ENCODE measurements at regions of chr11 and their contacts with region 1.

Region 1: DNA sequence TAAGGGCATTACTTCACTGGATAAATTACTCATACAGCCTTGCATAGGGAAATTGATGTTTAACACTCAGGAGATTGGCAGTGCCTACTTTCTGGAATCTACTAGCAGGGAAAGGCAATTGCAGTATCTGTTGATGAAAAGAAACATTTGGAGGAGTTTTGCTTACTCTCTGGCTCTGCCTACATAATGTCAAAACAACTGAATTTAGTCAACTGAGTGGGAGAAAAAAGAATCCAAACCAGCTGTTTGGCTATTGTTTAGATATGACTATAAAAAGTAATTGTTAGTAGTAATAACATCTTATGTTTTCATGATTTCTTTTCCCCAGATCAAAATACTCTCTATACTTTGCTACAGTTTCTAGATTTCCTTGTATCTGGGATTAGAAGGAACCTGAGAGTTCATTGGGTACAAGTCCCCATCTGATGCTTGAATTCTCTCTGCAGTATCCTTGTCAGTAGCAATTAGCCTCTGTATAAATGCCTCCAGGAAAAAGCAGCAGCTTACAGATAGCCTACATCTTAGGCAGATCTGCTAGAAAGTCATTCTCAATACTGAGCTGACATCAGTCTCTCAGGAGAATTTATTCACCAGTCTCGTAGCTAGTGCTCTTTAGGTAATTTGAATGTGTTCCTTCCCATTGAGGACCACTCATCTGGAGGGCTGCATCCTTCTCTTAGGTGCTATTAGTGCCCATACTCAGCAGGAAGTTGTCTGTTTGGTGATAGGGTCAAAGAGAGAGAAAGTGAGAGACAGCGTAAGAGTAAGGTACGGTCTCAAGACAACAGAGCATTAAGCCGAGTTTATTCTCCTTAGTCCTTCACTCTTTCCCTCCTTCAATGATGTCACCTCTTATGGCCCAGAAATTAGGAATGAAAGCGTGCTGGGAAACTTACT is 185.9 kb upstream of the CCDC90B start:
- DNase-seq: no peak
- ATAC-seq: no peak
- H3K4me3 ChIP-seq: no peak overlapping the region
- H3K27ac ChIP-seq: no peak overlapping the region
- H3K4me1 ChIP-seq: no peaks in the 10 kb centered on the region
- H3K27me3 ChIP-seq: no peaks in the 10 kb centered on the region
- CTCF ChIP-seq: no peak
- POLR2A ChIP-seq: no peak

Region 2: DNA sequence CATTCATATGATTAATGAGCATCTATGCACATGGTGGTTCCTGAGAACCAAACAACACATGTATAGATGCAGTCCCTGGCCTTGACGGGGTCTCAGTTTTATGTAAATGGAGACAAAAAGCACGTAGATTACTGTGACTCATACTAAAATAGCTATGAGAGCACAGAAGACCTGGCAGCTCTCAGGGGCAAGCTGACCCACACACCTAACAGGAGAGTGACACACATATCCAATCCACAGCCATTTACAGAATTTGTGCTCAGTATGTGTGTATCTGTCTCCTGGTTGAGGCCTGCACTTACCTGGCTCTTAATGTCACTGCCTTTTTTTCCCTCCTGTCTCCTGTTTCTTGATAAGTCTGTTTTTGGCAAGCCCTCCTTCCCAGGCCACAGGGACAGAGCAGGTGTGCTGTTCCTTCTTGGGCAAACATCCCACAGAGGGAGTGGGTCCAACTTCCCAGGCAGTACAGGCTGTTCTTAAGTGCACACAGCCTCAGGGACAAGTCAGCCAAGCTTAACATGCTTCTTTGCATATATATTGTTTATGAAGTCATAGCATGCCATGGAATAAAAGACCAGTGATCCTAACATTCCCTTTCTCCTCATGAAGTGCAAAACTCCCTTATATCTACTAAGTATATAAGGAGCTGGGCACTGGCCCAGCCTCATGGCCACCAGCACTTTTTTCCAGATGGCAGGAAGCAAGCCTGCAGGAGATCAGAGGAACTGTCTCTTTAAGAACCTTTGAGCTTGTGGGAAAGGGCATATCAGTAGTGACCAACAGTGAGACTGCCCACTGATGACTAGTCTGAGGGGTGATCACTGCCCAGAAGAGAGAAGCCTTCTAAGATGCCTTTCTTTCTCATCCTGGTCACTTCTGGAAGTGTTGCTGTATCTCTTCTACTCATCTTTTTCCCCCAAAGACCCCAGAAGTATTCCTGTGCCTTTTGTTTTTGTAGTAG is 61.2 kb before region 1 on chr11:
- intact Hi-C with region 1: loop called in 1 of 10 experiments (anchors 10 kb)
- DNase-seq: peak in 1 of 5 donors; percentile 16
- ATAC-seq: peak in 2 of 4 donors; percentile 29 to 53
- H3K4me3 ChIP-seq: no peak overlapping the region
- H3K27ac ChIP-seq: no peak overlapping the region
- H3K4me1 ChIP-seq: peaks cover 0 to 19% (median 2%) of the 10 kb centered on the region in 12 donors
- H3K27me3 ChIP-seq: no peaks in the 10 kb centered on the region
- CTCF ChIP-seq: no peak
- POLR2A ChIP-seq: no peak

Region 3: GRCh38 chr11:83691451-83691950 is 219.4 kb after region 1 on chr11:
- intact Hi-C with region 1: no loop called
- DNase-seq: peak in 4 of 5 donors; percentile 34 to 56 (median 46)
- ATAC-seq: peak; percentile 93 to 96 (median 94)
- H3K4me3 ChIP-seq: peak overlapping the region in 5 of 12 donors; percentile 1 to 26 (median 18)
- H3K27ac ChIP-seq: peak overlapping the region in 9 of 12 donors; percentile 2 to 63 (median 40)
- H3K4me1 ChIP-seq: peaks cover 0 to 26% (median 9%) of the 10 kb centered on the region in 12 donors
- H3K27me3 ChIP-seq: no peaks in the 10 kb centered on the region
- CTCF ChIP-seq: no peak
- POLR2A ChIP-seq: no peak

Region 4: GRCh38 chr11:83744620-83745192 is 272.6 kb after region 1 on chr11:
- intact Hi-C with region 1: loop called in 1 of 10 experiments (anchors 5 kb)
- DNase-seq: no peak
- ATAC-seq: no peak
- H3K4me3 ChIP-seq: no peak overlapping the region
- H3K27ac ChIP-seq: no peak overlapping the region
- H3K4me1 ChIP-seq: no peaks in the 10 kb centered on the region
- H3K27me3 ChIP-seq: no peaks in the 10 kb centered on the region
- CTCF ChIP-seq: no peak
- POLR2A ChIP-seq: no peak